GM12878 (cell line): ENCODE measurements at regions of chr2 and their contacts with region 1.

Region 1: GRCh38 chr2:195656859-195657633 is at the start of gene SLC39A10:
- DNase-seq: peak; percentile 93
- ATAC-seq: peak; percentile 78
- H3K4me3 ChIP-seq: peak within 1 kb of the TSS; percentile 98
- H3K27ac ChIP-seq: peak within 1 kb of the TSS; percentile 96
- H3K4me1 ChIP-seq: no peaks in the 10 kb centered on the region
- H3K27me3 ChIP-seq: no peaks in the 10 kb centered on the region
- CTCF ChIP-seq: peak in 1 of 3 experiments; percentile 25; a peak in 1 of 6 replicates
- EP300 ChIP-seq: 0 out of 4 replicates have a peak, but pooled peaks of 1 of the 2 experiments have one; percentile 18
- POLR2A ChIP-seq: peak; percentile 98
- RAD21 ChIP-seq: no peak
- polyA plus RNA-seq, gene SLC39A10: 2.0 to 4.9 TPM

Region 2: DNA sequence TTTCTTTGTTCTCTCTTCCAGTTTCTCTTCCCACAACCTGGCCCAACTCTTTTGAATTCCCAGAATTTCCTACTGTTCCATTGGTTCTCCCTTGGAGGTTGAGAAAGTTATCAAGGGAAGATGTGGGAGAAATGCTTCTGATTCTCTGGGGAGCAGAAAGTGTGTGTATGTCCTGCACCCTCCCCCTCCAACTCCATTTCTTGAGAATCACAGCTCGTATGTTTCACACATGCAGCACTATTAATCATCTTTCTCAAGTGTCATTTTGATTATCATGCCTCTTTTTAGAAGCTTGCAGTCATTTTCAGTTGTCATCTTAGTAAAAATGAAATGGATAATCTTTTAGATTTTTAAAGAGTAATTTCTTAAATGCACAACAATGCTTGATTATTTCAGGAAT is 296.8 kb before region 1 on chr2:
- CTCF ChIA-PET with region 1: no interaction called
- POLR2A ChIA-PET with region 1: no interaction called
- RAD21 ChIA-PET with region 1: no interaction called
- SMC1A ChIA-PET with region 1: no interaction called
- in situ Hi-C with region 1: no loop called
- intact Hi-C with region 1: no loop called
- DNase-seq: no peak
- ATAC-seq: no peak
- H3K4me3 ChIP-seq: no peak overlapping the region
- H3K27ac ChIP-seq: no peak overlapping the region
- H3K4me1 ChIP-seq: no peaks in the 10 kb centered on the region
- H3K27me3 ChIP-seq: no peaks in the 10 kb centered on the region
- CTCF ChIP-seq: no peak
- EP300 ChIP-seq: no peak
- POLR2A ChIP-seq: no peak
- RAD21 ChIP-seq: no peak

Region 3: GRCh38 chr2:195410074-195410671 is 246.9 kb before region 1 on chr2:
- CTCF ChIA-PET with region 1: interaction called, 11 read pairs
- POLR2A ChIA-PET with region 1: no interaction called
- RAD21 ChIA-PET with region 1: interaction called, 9 read pairs
- SMC1A ChIA-PET with region 1: interaction called, 8 read pairs
- in situ Hi-C with region 1: no loop called
- intact Hi-C with region 1: loop called (anchors 2 kb)
- DNase-seq: peak; percentile 60
- ATAC-seq: peak; percentile 80
- H3K4me3 ChIP-seq: no peak overlapping the region
- H3K27ac ChIP-seq: peak overlapping the region; percentile 29
- H3K4me1 ChIP-seq: no peaks in the 10 kb centered on the region
- H3K27me3 ChIP-seq: no peaks in the 10 kb centered on the region
- CTCF ChIP-seq: no peak
- EP300 ChIP-seq: peak; percentile 68 to 83; a peak in 3 of 4 replicates
- POLR2A ChIP-seq: no peak
- RAD21 ChIP-seq: no peak

Region 4: GRCh38 chr2:195533771-195534642 is 123.0 kb before region 1 on chr2:
- CTCF ChIA-PET with region 1: interaction called, 95 read pairs
- POLR2A ChIA-PET with region 1: interaction called, 27 read pairs
- RAD21 ChIA-PET with region 1: interaction called, 133 read pairs
- SMC1A ChIA-PET with region 1: interaction called, 149 read pairs
- in situ Hi-C with region 1: no loop called
- intact Hi-C with region 1: loop called (anchors 1 kb)
- DNase-seq: no peak
- ATAC-seq: peak; percentile 42
- H3K4me3 ChIP-seq: no peak overlapping the region
- H3K27ac ChIP-seq: no peak overlapping the region; the same call in 1 of the 2 replicates
- H3K4me1 ChIP-seq: peaks cover 29% of the 10 kb centered on the region
- H3K27me3 ChIP-seq: no peaks in the 10 kb centered on the region
- CTCF ChIP-seq: peak; percentile 23 to 35 (median 30); a peak in 3 of 6 replicates
- EP300 ChIP-seq: no peak
- POLR2A ChIP-seq: no peak
- RAD21 ChIP-seq: peak; percentile 27; the same call in 1 of the 2 replicates

Region 5: DNA sequence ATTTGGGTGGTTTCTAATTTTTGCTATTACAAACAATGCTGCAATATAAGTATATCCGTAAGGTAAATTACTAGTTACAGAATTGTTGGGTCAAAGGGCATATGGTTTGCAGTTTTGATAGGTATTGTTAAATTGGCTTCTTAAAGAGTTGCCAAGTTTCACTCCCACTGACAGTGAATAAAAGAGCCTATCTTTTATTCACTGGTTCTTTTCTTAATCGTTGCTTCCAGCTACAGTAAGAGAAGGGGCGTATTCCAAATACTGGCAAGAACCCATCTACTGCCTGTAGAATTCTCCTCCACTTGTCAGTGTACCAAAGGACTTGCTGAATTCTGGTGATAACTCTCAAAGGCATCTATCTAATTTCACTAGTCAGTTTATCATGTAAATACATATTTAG is 90.8 kb before region 1 on chr2:
- CTCF ChIA-PET with region 1: interaction called, 38 read pairs
- POLR2A ChIA-PET with region 1: interaction called, 26 read pairs
- RAD21 ChIA-PET with region 1: interaction called, 95 read pairs
- SMC1A ChIA-PET with region 1: interaction called, 53 read pairs
- in situ Hi-C with region 1: loop called (anchors 5 kb)
- intact Hi-C with region 1: loop called (anchors 1 kb)
- DNase-seq: no peak
- ATAC-seq: no peak
- H3K4me3 ChIP-seq: no peak overlapping the region
- H3K27ac ChIP-seq: no peak overlapping the region
- H3K4me1 ChIP-seq: peaks cover 15% of the 10 kb centered on the region
- H3K27me3 ChIP-seq: no peaks in the 10 kb centered on the region
- CTCF ChIP-seq: no peak
- EP300 ChIP-seq: no peak
- POLR2A ChIP-seq: no peak
- RAD21 ChIP-seq: no peak

Region 6: GRCh38 chr2:195672668-195673067 is 15.6 kb after region 1 on chr2:
- CTCF ChIA-PET with region 1: interaction called, 13 read pairs
- POLR2A ChIA-PET with region 1: no interaction called
- RAD21 ChIA-PET with region 1: interaction called, 9 read pairs
- SMC1A ChIA-PET with region 1: interaction called, 5 read pairs
- in situ Hi-C with region 1: no loop called
- intact Hi-C with region 1: no loop called
- DNase-seq: no peak
- ATAC-seq: no peak
- H3K4me3 ChIP-seq: no peak overlapping the region
- H3K27ac ChIP-seq: no peak overlapping the region
- H3K4me1 ChIP-seq: no peaks in the 10 kb centered on the region
- H3K27me3 ChIP-seq: no peaks in the 10 kb centered on the region
- CTCF ChIP-seq: peak in 2 of 3 experiments; percentile 15 to 22; a peak in 2 of 6 replicates
- EP300 ChIP-seq: no peak
- POLR2A ChIP-seq: no peak
- RAD21 ChIP-seq: no peak

Region 7: GRCh38 chr2:196160101-196160500 is 503.1 kb after region 1 on chr2:
- CTCF ChIA-PET with region 1: no interaction called
- POLR2A ChIA-PET with region 1: interaction called, 5 read pairs
- RAD21 ChIA-PET with region 1: no interaction called
- SMC1A ChIA-PET with region 1: no interaction called
- in situ Hi-C with region 1: no loop called
- intact Hi-C with region 1: loop called (anchors 10 kb)
- DNase-seq: peak; percentile 86
- ATAC-seq: peak; percentile 64
- H3K4me3 ChIP-seq: no peak overlapping the region; the same call in 1 of the 2 replicates
- H3K27ac ChIP-seq: peak overlapping the region; percentile 77
- H3K4me1 ChIP-seq: peaks cover 29% of the 10 kb centered on the region
- H3K27me3 ChIP-seq: no peaks in the 10 kb centered on the region
- CTCF ChIP-seq: no peak
- EP300 ChIP-seq: peak; percentile 93
- POLR2A ChIP-seq: no peak
- RAD21 ChIP-seq: peak; percentile 17; the same call in 1 of the 2 replicates

Region 8: DNA sequence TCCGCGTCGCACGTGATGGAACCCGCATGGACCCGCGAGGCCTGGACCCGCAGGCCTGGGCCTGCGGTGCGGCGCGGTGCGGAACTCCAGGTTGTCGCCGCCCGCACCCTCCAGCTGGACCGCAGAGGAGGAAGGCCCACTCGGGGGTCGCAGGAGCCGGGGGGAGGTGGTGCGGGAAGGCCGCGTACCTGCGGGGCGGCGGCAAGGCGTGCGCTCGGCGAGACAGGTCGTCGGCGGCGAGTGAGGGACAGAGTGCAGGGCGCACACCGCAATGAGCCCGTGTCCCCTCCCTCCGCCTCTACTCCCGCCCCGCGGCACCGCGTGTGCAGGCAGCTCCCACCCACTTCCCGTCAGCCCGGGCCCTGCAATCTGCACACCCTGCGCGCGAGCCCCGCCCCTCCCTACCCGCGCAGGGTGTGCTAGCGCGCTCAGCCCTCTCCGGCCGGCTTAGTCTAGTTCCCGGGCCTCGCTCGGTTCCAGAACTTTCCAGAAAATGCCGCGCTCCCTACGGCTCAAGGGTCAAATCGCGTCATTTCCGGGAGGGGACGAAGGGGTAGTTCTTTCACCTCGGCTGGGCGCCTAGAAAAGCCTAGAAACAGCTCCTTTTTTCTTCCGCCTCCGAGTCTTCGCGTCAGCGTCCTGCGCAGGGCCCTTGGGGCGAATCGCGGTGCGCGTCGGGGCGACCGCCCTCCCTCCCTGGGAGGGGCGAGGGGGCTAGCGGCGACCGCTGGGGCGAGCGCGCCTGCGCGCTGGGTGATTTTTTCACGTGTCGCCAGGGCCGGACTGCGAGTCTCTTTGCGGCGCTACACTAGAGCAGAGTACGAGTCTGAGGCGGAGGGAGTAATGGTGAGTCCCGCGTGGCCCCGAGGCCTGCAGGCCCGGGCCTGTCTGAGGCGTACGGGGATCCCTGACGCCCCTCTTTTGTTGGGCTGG is 1842.8 kb after region 1 on chr2 and contains the starts of genes HSPD1 and HSPE1:
- CTCF ChIA-PET with region 1: no interaction called
- POLR2A ChIA-PET with region 1: no interaction called
- RAD21 ChIA-PET with region 1: no interaction called
- SMC1A ChIA-PET with region 1: no interaction called
- in situ Hi-C with region 1: no loop called
- intact Hi-C with region 1: no loop called
- DNase-seq: peak; percentile 97
- ATAC-seq: peak; percentile 88
- H3K4me3 ChIP-seq: peak within 1 kb of the TSS; percentile 88
- H3K27ac ChIP-seq: peak within 1 kb of the TSS; percentile 91
- H3K4me1 ChIP-seq: peaks cover 13% of the 10 kb centered on the region
- H3K27me3 ChIP-seq: no peaks in the 10 kb centered on the region
- CTCF ChIP-seq: no peak
- EP300 ChIP-seq: peak in 1 of 2 experiments; percentile 98; a peak in 2 of 4 replicates
- POLR2A ChIP-seq: peak; percentile 96
- RAD21 ChIP-seq: no peak
- polyA plus RNA-seq, gene HSPD1: 659 to 997 TPM
- polyA plus RNA-seq, gene HSPE1: 872 to 988 TPM